GM18951 (cell line): ENCODE measurements at regions of chr1 and their contacts with region 1.

Region 1: DNA sequence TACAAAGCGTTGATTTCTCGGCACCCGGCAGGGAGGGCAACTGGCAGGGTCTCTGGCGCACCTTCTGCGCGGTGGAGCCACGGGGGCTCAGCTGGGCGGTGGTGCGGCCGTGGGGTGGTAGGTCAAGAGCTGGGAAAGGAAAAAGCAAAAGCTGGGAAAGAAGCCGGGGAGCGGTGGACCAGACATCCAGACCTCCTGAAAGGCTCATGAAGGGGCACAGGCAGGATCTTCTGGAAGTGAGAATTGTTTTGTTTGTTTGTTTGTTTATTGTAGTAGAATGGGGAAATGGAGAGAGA is 7.2 kb upstream of the RNU1-1 start:
- POLR2A ChIP-seq: no peak

Region 2: GRCh38 chr1:16644193-16644481 is 122.9 kb after region 1 on chr1:
- in situ Hi-C with region 1: loop called (anchors 25 kb)
- POLR2A ChIP-seq: no peak

Region 3: GRCh38 chr1:16913833-16914662 is 392.8 kb after region 1 on chr1:
- in situ Hi-C with region 1: loop called (anchors 25 kb)
- POLR2A ChIP-seq: peak; percentile 44

Region 4: DNA sequence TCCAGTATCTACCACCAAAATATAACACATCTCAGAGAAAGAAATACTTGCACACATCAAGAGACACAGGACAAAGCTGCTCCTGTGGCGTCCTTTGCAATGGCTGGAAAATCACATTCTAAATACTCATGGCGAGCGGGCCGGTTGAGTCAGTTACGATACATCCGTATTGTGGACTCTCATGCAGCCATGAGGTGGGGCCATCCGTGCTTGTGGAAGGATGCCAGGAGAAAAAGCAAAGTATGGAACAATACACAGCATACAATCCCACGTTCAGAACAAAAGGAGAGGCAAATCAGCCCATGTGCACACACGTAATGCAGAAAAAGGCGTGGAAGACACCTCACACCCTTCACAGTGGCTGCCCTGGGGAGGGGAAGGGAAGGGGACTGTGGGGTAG is 477.4 kb after region 1 on chr1:
- in situ Hi-C with region 1: no loop called
- POLR2A ChIP-seq: no peak

Region 5: DNA sequence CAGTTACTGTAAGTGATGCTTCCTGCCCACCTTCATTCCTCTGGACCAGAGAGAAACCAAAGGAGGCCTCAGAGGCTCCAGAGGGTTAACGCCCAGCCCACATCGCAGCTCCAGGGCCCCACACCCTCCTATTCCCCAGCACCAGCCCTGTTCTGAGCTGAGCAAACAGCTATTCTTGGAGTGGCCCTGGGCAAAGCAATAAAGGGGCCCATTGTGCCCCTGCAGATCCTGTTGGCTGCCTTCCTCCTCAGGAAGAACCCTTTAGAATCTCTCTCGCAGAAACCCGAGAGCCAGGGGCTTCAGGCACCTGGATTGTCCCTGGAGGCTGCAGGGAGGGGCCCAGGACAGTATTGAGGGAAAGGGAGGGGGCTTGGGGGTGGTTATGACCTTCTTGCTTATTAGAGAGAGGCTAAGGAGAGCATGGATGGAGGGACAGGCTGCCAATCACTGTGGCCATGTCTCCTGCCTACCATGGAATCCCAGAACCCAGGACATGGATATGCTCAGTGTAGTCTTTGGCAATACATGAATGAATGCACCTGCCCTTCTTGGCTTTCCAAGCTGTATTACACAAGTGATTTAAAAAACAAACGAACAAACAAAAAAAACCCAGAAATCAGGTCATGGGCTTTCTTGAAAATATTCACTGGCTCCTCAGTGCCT is 588.8 kb after region 1 on chr1:
- in situ Hi-C with region 1: no loop called
- POLR2A ChIP-seq: no peak